Activated T-helper 2 cell treated with anti-CD3 and anti-CD28 coated beads, Interferon-gamma antibody, Interleukin-2, Interleukin-4, amounts not matched to agents 10 μg/mL and 5 μg/mL and 100 μg/mL, durations not matched to agents 14 hours and 24 hours and 36 hours (primary cell): ENCODE measurements at regions of chr12 and their contacts with region 1.

Region 1: GRCh38 chr12:71840231-71840847 is 780 bp downstream of the TBC1D15 start:
- DNase-seq: no peak
- H3K4me3 Mint-ChIP-seq: peak overlapping the region; percentile 94
- H3K27ac Mint-ChIP-seq: peak overlapping the region; percentile 96
- H3K4me1 Mint-ChIP-seq: peaks cover 35% of the 10 kb centered on the region
- H3K27me3 Mint-ChIP-seq: no peaks in the 10 kb centered on the region

Region 2: GRCh38 chr12:71685914-71686665 is 154.2 kb before region 1 on chr12 and contains the start of gene TMEM19:
- intact Hi-C with region 1: loop called (anchors 1 kb)
- DNase-seq: peak; percentile 79
- H3K4me3 Mint-ChIP-seq: peak within 1 kb of the TSS; percentile 90
- H3K27ac Mint-ChIP-seq: peak within 1 kb of the TSS; percentile 95
- H3K4me1 Mint-ChIP-seq: peaks cover 21% of the 10 kb centered on the region
- H3K27me3 Mint-ChIP-seq: no peaks in the 10 kb centered on the region
- total RNA-seq, gene TMEM19: 11.0 and 14.3 TPM in 2 replicates

Region 3: GRCh38 chr12:71754461-71755145 is 85.7 kb before region 1 on chr12 and contains the start of gene RAB21:
- intact Hi-C with region 1: loop called (anchors 1 kb)
- DNase-seq: peak; percentile 97
- H3K4me3 Mint-ChIP-seq: peak within 1 kb of the TSS; percentile 93
- H3K27ac Mint-ChIP-seq: peak within 1 kb of the TSS; percentile 95
- H3K4me1 Mint-ChIP-seq: peaks cover 22% of the 10 kb centered on the region
- H3K27me3 Mint-ChIP-seq: peaks cover 24% of the 10 kb centered on the region
- total RNA-seq, gene RAB21: 95.4 and 96.1 TPM in 2 replicates

Region 4: DNA sequence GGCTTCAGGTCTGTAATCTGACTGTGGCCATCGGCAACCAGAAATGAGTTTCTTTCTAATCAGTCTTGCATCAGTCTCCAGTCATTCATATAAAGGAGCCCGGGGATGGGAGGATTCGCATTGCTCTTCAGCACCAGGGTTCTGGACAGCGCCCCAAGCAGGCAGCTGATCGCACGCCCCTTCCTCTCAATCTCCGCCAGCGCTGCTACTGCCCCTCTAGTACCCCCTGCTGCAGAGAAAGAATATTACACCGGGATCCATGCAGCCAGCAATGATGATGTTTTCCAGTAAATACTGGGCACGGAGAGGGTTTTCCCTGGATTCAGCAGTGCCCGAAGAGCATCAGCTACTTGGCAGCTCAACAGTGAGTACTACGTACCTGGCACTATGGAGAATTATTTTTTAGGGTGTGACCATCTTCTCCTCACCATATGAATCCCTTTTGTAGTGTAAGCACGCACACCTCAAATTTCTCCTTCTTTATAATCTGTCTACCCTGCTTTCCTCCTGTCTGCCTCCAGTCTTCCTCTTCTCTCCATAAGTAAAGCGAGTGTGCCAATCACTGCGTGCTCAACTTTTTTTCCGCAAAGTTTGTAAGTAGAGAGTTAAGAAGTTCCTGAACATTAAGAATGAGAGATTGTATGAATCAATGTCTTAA is 98.5 kb after region 1 on chr12 and contains the start of gene TPH2:
- intact Hi-C with region 1: loop called (anchors 5 kb)
- DNase-seq: peak; percentile 49
- H3K4me3 Mint-ChIP-seq: no peak within 1 kb of the TSS
- H3K27ac Mint-ChIP-seq: no peak within 1 kb of the TSS
- H3K4me1 Mint-ChIP-seq: peaks cover 6% of the 10 kb centered on the region
- H3K27me3 Mint-ChIP-seq: peaks cover 32% of the 10 kb centered on the region
- total RNA-seq, gene TPH2: not detected in 2 replicates